ENCODE measurements at regions of chr14 and their contacts with region 1.

Region 1: DNA sequence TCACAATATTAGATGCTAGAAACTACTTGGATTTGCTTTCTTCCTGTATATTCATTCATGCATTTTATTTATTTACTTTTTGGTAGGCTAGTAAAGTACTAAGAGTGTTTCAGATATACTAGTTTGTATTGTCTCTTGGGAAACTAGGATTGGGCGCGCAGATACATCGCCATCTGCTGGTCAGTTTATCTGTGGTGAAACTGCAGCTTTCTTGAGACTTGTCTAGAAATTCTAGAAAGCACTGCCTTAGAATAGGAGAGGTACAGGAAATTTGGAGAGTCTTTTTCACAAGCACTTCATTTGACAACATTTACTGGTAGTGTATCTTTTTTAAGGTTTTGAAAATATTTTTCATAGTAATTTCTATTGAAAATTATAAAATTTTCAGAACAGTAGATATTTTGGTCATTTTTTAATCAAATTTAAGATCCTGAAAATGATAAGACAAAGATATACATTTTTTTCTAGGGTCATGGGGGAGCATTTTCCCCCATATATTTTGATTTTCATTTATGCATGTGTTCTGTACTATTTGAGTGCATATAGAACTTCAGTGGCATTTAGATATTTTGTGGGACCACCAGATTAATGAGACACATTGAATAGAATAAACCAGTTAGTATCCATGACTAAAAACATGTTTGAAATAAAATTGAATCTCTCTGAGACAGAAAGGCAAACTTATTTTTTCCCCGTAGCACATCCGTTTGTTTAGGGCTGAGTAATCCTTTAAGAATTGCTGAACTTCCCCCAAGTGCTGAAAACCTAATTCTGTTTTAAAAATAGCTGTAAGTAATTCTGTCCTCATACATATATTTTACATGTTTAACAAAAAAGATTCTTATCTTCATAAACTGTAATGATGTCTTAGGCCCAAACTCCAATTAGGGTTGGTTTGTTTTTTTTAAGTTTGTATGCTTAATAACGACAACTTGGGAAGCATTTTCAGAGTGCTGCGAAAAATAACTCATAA is 44.5 kb downstream of the SLC38A6 start:
- DNase-seq: peak; percentile 11 to 92 (median 56)

Region 2: GRCh38 chr14:60622917-60623257 is 402.6 kb before region 1 on chr14:
- intact Hi-C with region 1: loop called (anchors 1 kb)
- DNase-seq: no peak

Region 3: DNA sequence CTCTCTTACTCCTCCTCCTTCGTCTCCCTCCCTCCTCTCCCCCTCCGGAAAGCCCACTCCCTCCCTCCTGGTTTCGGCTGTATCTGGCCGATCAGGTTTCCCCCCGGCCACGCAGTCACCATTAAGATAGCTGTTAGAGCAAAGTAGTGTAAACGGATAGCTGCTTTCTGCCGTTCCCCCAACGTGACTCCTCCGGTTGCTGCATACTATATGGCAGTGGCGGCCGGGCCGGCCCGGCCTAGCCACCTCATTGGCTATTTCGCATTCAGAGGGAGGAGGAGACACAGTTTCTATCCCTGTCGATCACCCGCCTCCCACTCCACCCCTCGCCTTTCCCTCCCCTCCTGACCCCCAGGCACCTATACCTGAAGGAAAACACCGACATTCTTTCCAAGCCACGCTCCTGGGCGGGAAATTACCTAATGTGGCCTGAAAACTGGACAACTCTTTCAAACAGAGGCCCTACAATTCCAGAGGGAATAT is 301.4 kb before region 1 on chr14 and contains the start of gene SIX4:
- intact Hi-C with region 1: no loop called
- DNase-seq: peak; percentile 21 to 91 (median 70)

Region 4: DNA sequence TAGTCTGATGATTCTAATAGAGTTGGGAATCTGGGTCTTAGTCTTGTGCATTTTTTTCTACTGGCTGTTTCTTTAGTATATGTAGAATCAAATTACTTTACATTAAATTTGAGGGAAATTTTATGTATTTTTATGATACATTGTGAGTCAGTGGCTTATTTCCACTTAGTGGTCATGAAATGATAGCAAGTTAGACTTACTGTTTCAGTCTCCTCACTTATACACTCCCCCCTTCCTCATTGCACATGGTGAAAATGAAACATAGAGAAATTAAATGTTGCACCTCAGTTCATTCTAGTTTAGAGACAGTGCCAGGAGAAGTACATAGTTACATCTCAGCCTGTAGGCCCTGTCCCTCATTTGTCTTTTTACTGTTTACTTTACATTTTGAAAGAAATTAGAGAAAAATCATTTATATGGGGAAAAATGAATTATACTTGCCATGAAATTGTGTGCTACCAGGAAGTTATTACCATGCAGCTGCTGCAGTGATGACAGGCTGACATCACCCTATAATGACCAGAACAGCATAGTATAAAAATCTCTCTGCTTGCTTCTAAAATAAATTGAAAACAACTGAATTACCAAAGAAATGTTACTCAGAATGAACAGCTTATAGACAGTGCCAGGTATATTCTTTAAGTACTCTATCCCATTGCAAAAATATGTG is 157.9 kb before region 1 on chr14:
- intact Hi-C with region 1: no loop called
- DNase-seq: no peak

Measured in posterior cingulate gyrus (tissue), 11 donors.